ENCODE measurements at regions of chr2 and their contacts with region 1.

Region 1: DNA sequence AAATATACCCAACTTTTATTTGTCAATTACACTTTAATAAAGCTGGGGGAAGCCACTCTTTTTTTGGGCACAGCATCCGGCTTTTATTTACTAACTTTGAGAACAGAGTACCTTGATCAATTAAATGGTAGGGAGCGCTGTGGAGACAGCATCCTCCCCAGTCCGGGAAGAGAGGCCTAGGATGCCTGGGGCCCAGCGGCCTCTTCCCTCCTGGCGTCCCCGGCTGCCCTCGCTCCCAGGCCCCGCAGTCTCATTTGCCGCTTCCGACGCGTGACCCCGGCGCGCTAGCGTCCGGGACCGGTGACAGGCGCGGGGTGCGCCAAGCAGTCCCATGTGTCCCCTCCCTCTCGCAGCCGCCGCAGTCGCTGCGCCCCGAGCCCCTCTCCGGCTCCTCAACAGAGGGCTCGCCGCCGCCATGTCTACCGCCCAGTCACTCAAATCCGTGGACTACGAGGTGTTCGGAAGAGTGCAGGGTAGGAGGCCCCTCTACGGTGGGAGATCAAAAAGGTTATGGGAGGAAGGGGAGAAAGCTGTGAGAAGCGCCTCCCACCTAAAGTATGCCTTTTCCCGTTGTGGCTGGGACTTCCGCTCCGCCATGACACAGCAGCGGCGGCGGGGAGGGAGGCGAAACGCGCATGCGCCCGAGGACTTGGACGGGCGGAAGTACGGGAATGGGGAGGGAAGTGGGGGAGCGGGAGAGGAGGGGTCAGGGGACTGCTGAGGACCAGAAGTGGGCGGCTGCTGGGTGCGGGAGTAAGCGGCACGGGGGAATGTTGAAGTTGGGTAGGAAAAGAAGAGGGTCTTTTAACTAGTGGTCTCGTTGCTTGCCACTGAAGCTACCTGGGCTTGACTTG is at the start of gene ACYP2:
- DNase-seq: peak; percentile 87
- H3K4me3 ChIP-seq: peak within 1 kb of the TSS; percentile 68 to 73 (median 70)
- H3K27ac ChIP-seq: peak within 1 kb of the TSS; percentile 91
- H3K4me1 ChIP-seq: no peaks in the 10 kb centered on the region
- H3K27me3 ChIP-seq: no peaks in the 10 kb centered on the region
- CTCF ChIP-seq: peak in 1 of 2 donors; percentile 51
- total RNA-seq, gene ACYP2: 14.0 to 19.3 TPM

Region 2: GRCh38 chr2:54158311-54158710 is 42.8 kb after region 1 on chr2:
- CTCF ChIA-PET with region 1: no interaction called
- dilution Hi-C with region 1: no loop called
- in situ Hi-C with region 1: no loop called
- intact Hi-C with region 1: no loop called
- DNase-seq: no peak
- H3K4me3 ChIP-seq: no peak overlapping the region
- H3K27ac ChIP-seq: no peak overlapping the region
- H3K4me1 ChIP-seq: no peaks in the 10 kb centered on the region
- H3K27me3 ChIP-seq: no peaks in the 10 kb centered on the region
- CTCF ChIP-seq: no peak

Region 3: DNA sequence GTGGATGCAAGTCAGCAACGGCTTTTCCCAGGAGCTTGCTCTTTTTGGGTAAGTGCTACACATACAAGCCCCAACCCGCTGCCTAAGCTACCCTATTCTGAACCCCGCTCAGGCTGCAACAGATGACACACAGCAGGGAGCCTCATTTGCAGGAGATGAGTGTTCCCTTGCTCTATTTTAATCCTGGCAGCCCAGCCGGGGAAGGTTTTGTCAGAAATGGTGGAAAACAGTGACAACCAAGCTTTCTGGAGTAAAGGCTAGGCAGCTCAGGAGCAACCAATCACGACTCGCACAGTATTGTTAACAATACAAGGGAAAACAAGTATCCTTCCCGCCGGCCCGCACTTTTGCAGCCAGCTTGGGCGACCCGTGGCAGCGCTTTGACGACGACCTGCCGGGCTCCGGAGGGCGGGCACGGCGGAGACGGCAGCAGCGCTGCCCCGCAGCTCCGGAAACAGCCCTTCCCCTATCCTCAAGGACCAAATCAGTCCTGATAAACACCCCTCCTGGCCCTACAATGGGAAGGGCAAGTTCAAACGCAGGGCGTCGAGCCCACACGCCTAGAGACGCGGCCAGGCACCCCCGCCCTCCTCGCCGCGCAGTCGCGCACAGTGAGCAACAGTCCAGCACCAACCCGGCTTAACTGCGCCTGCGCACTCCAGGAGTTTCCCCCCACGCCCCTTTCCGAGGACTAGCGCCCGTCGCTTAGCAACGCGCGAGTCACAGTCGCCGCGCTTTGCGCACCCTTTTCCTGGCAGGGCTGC is 214.8 kb after region 1 on chr2:
- CTCF ChIA-PET with region 1: no interaction called
- dilution Hi-C with region 1: no loop called
- in situ Hi-C with region 1: no loop called
- intact Hi-C with region 1: loop called (anchors 2 kb)
- DNase-seq: peak; percentile 92
- H3K4me3 ChIP-seq: peak overlapping the region; percentile 41 to 62 (median 59)
- H3K27ac ChIP-seq: peak overlapping the region; percentile 68
- H3K4me1 ChIP-seq: peaks cover 19% of the 10 kb centered on the region
- H3K27me3 ChIP-seq: no peaks in the 10 kb centered on the region
- CTCF ChIP-seq: no peak

Region 4: GRCh38 chr2:54455563-54456361 is 340.3 kb after region 1 on chr2 and contains the start of gene SPTBN1:
- CTCF ChIA-PET with region 1: interaction called, 6 read pairs
- dilution Hi-C with region 1: no loop called
- in situ Hi-C with region 1: no loop called
- intact Hi-C with region 1: loop called (anchors 5 kb)
- DNase-seq: peak; percentile 74
- H3K4me3 ChIP-seq: peak within 1 kb of the TSS; percentile 60 to 81 (median 81)
- H3K27ac ChIP-seq: peak within 1 kb of the TSS; percentile 32
- H3K4me1 ChIP-seq: peaks cover 26% of the 10 kb centered on the region
- H3K27me3 ChIP-seq: no peaks in the 10 kb centered on the region
- CTCF ChIP-seq: no peak
- total RNA-seq, gene SPTBN1: 206 to 210 TPM

Region 5: DNA sequence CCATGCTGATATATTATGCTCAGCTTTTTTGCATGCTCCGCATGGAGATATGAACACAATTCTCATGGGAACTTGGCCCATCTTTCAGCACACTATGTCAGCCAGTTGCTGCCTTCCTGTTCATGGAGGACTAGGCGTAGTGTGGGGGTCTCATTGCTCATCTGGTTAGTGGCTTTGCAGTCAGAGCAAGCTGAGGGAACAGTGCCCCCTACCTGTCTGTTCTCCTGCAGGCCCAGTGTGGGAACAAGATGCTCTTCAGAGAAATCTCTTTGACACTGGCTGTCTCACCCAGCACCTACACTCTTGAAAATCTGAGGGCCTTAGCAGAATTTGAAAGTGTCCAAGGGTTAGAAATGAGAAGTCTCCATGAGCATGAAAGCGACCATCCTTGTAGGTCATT is 387.7 kb after region 1 on chr2:
- CTCF ChIA-PET with region 1: no interaction called
- dilution Hi-C with region 1: no loop called
- in situ Hi-C with region 1: loop called in 1 of 2 experiments (anchors 25 kb)
- intact Hi-C with region 1: loop called (anchors 2 kb)
- DNase-seq: no peak
- H3K4me3 ChIP-seq: no peak overlapping the region
- H3K27ac ChIP-seq: no peak overlapping the region
- H3K4me1 ChIP-seq: no peaks in the 10 kb centered on the region
- H3K27me3 ChIP-seq: no peaks in the 10 kb centered on the region
- CTCF ChIP-seq: peak; percentile 53 to 76

Region 6: DNA sequence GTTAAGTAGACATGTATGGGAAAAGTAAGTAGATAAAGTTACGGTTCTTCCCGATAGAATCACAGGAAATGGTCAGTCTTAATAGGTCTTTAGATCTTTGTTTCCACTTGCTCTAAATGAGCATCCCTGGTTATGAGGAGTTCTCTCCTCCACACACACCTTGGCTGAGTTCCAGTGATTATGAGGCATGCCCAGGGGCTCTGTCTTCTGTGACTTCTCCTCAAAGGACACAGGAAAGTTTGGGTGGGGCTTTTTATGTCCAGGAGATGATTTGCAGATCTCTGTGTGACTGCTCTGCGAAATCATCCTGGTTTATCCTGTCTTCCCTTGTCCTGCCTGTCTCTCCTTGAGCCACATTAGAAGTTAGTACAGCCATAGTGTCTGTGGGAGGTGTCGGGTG is 524.1 kb after region 1 on chr2:
- CTCF ChIA-PET with region 1: no interaction called
- dilution Hi-C with region 1: no loop called
- in situ Hi-C with region 1: no loop called
- intact Hi-C with region 1: no loop called
- DNase-seq: peak; percentile 68
- H3K4me3 ChIP-seq: no peak overlapping the region
- H3K27ac ChIP-seq: no peak overlapping the region
- H3K4me1 ChIP-seq: peaks cover 20% of the 10 kb centered on the region
- H3K27me3 ChIP-seq: no peaks in the 10 kb centered on the region
- CTCF ChIP-seq: no peak

Measured in mammary epithelial cell (primary cell).